B cell (primary cell): ENCODE measurements at regions of chr9 and their contacts with region 1.

Region 1: GRCh38 chr9:99231711-99232110 is 9.6 kb downstream of the SEC61B start:
- DNase-seq: peak; percentile 52
- ATAC-seq: no peak
- H3K4me3 ChIP-seq: no peak overlapping the region
- H3K4me3 Mint-ChIP-seq: no peak overlapping the region
- H3K27ac ChIP-seq: no peak overlapping the region
- H3K27ac Mint-ChIP-seq: no peak overlapping the region
- H3K4me1 ChIP-seq: peaks cover 21 to 23% of the 10 kb centered on the region in 2 donors
- H3K4me1 Mint-ChIP-seq: peaks cover 29% of the 10 kb centered on the region
- H3K27me3 ChIP-seq: no peaks in the 10 kb centered on the region
- H3K27me3 Mint-ChIP-seq: no peaks in the 10 kb centered on the region
- CTCF ChIP-seq: peak; percentile 75

Region 2: DNA sequence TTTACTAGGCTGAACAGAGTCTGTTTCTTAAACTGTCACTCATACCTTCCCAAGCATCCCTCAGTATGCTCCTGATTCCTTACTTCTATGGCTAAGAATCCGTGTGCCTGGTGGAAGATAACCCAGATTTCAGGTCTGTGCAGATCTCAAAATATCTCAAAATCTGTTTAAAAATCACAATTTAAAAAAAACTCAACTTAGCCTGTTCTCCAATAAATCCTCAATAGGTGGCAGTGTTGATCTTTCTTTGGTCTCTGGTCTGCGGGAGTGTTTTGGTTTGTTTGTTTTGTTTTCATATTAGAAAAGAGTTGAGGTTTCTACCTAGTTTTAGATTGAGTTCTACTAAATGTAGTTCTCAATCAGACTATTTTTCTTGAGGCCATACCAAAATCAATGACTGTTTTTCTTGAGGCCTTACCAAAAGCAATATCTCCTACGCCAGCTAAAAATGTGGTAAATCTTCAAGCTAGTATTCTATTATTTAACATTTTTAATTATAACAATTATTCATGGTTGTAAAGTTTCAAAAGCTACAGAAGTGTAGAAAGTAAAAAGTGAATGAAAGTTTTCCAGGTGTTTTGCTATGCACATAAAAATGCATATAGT is 68.8 kb before region 1 on chr9:
- CTCF ChIA-PET with region 1: interaction called, 13 read pairs
- POLR2A ChIA-PET with region 1: no interaction called
- intact Hi-C with region 1: loop called (anchors 10 kb)
- DNase-seq: peak; percentile 69
- ATAC-seq: peak; percentile 59
- H3K4me3 ChIP-seq: no peak overlapping the region
- H3K4me3 Mint-ChIP-seq: peak overlapping the region; percentile 27
- H3K27ac ChIP-seq: no peak overlapping the region
- H3K27ac Mint-ChIP-seq: no peak overlapping the region
- H3K4me1 ChIP-seq: peaks cover 8 to 9% of the 10 kb centered on the region in 2 donors
- H3K4me1 Mint-ChIP-seq: peaks cover 37% of the 10 kb centered on the region
- H3K27me3 ChIP-seq: no peaks in the 10 kb centered on the region
- H3K27me3 Mint-ChIP-seq: no peaks in the 10 kb centered on the region
- CTCF ChIP-seq: peak; percentile 82

Region 3: DNA sequence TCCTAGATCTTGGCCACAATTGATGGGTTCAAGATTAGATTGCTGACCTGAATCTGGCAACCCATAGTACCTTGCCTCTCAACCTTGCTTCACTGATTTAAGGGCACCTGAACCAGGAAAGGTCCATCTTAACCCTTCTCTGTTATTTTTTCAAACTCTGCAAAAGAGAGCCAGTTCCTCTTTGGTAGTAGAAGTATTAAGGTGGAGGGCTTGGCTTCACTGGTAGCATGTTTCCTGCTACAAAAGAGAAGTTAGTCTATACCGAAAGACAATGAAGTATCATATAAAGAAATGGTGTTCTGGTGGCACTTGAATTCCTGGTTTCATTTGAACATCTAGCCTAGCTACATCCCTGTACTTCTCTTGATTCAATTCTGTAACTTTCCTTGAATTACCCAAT is 18.5 kb before region 1 on chr9:
- CTCF ChIA-PET with region 1: interaction called, 12 read pairs
- POLR2A ChIA-PET with region 1: interaction called, 3 read pairs
- intact Hi-C with region 1: no loop called
- DNase-seq: peak; percentile 23
- ATAC-seq: peak; percentile 21
- H3K4me3 ChIP-seq: no peak overlapping the region
- H3K4me3 Mint-ChIP-seq: no peak overlapping the region
- H3K27ac ChIP-seq: peak overlapping the region in 1 of 2 donors; percentile 3
- H3K27ac Mint-ChIP-seq: no peak overlapping the region
- H3K4me1 ChIP-seq: peaks cover 9 to 10% of the 10 kb centered on the region in 2 donors
- H3K4me1 Mint-ChIP-seq: peaks cover 30% of the 10 kb centered on the region
- H3K27me3 ChIP-seq: peaks cover 0 to 3% (median 0%) of the 10 kb centered on the region in 4 experiments
- H3K27me3 Mint-ChIP-seq: no peaks in the 10 kb centered on the region
- CTCF ChIP-seq: no peak

Region 4: GRCh38 chr9:99253772-99254431 is 22.2 kb after region 1 on chr9:
- CTCF ChIA-PET with region 1: interaction called, 14 read pairs
- POLR2A ChIA-PET with region 1: interaction called, 3 read pairs
- intact Hi-C with region 1: loop called (anchors 2 kb)
- DNase-seq: peak; percentile 79
- ATAC-seq: peak; percentile 87
- H3K4me3 ChIP-seq: peak overlapping the region in 4 of 5 experiments; percentile 4 to 36 (median 24)
- H3K4me3 Mint-ChIP-seq: peak overlapping the region; percentile 71
- H3K27ac ChIP-seq: peak overlapping the region in 1 of 2 donors; percentile 2
- H3K27ac Mint-ChIP-seq: peak overlapping the region; percentile 87
- H3K4me1 ChIP-seq: peaks cover 11 to 13% of the 10 kb centered on the region in 2 donors
- H3K4me1 Mint-ChIP-seq: peaks cover 18% of the 10 kb centered on the region
- H3K27me3 ChIP-seq: no peaks in the 10 kb centered on the region
- H3K27me3 Mint-ChIP-seq: no peaks in the 10 kb centered on the region
- CTCF ChIP-seq: no peak

Region 5: GRCh38 chr9:99266255-99267023 is 34.7 kb after region 1 on chr9:
- CTCF ChIA-PET with region 1: interaction called, 29 read pairs
- POLR2A ChIA-PET with region 1: no interaction called
- intact Hi-C with region 1: loop called (anchors 1 kb)
- DNase-seq: peak; percentile 81
- ATAC-seq: peak; percentile 74
- H3K4me3 ChIP-seq: peak overlapping the region in 1 of 5 experiments; percentile 3
- H3K4me3 Mint-ChIP-seq: peak overlapping the region; percentile 71
- H3K27ac ChIP-seq: no peak overlapping the region
- H3K27ac Mint-ChIP-seq: peak overlapping the region; percentile 59
- H3K4me1 ChIP-seq: peaks cover 6 to 9% of the 10 kb centered on the region in 2 donors
- H3K4me1 Mint-ChIP-seq: peaks cover 31% of the 10 kb centered on the region
- H3K27me3 ChIP-seq: no peaks in the 10 kb centered on the region
- H3K27me3 Mint-ChIP-seq: peaks cover 3% of the 10 kb centered on the region
- CTCF ChIP-seq: peak; percentile 95

Region 6: DNA sequence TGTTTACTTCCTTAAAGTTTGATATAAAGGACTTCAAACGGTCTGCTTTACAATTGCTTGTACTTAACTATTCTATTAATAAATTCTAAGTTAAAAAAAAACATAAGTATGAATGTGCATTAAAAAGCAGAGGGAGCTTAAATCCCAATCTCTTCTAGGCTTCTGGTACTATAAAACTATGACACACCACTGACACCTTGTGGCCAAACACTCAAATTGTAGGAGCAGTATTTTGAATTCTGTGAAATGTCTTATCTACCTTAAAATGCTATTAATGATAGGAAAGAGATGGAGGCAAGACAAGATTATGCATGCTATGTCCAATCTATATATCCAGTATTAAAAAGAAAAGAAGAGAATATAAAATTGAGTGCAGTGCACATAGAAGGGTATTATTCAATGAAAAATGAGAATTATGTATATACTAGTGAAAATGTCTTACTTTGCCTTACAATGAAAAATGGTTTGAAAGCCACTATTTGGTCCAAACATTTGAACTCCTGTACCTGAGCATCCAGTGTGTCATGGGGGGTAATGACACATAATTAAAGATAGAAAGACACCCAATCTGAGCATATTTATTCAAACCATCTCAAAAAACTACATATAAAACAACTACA is 779.5 kb after region 1 on chr9:
- CTCF ChIA-PET with region 1: interaction called, 27 read pairs
- POLR2A ChIA-PET with region 1: no interaction called
- intact Hi-C with region 1: loop called (anchors 1 kb)
- DNase-seq: peak; percentile 66
- ATAC-seq: no peak
- H3K4me3 ChIP-seq: no peak overlapping the region
- H3K4me3 Mint-ChIP-seq: no peak overlapping the region
- H3K27ac ChIP-seq: no peak overlapping the region
- H3K27ac Mint-ChIP-seq: no peak overlapping the region
- H3K4me1 ChIP-seq: no peaks in the 10 kb centered on the region
- H3K4me1 Mint-ChIP-seq: no peaks in the 10 kb centered on the region
- H3K27me3 ChIP-seq: no peaks in the 10 kb centered on the region
- H3K27me3 Mint-ChIP-seq: no peaks in the 10 kb centered on the region
- CTCF ChIP-seq: peak; percentile 82